HAP-1 (cell line): ENCODE measurements at regions of chr1 and their contacts with region 1.

Region 1: GRCh38 chr1:158124999-158125398 is 55.7 kb upstream of the CD1D start:
- DNase-seq: peak; percentile 89 to 94
- H3K4me3 ChIP-seq: no peak overlapping the region
- H3K4me1 ChIP-seq: no peaks in the 10 kb centered on the region
- H3K27me3 ChIP-seq: peaks cover 7% of the 10 kb centered on the region; the same call in 1 of the 2 replicates

Region 2: DNA sequence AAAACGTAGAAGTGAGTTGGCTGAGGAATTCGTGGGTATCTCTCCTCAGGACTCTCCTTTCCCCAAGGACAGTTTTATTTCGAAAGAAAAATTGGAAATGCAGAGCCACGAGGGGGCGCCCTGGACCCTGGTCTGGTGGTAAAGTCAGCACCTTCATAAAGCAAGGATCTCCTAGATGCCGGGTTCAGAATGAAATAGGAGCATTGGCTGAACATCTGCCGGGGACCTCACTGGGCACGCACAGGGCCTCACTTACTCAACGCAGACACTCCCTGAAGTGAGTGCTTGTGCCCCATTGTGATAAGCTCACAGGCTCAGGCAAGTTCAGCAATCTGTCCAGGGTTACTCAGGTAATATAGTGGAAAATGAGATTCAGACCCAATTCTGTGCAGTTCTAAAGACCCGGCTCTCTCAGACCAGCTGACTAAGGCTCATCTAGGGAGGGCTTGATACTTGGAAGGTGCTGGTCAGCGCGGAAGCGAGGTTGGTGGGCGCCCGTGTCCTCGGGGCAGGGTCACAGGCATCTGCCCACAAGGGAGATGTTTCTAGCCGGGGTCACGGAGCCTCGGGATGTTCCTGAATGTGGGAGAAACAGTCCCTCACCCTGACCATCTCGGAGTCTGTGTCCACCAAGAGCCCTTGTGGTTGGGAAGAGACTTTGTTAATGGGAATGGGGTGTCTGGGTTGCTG is 931.2 kb before region 1 on chr1:
- in situ Hi-C with region 1: loop called (anchors 25 kb)
- DNase-seq: peak; percentile 68 to 89
- H3K4me3 ChIP-seq: no peak overlapping the region
- H3K4me1 ChIP-seq: no peaks in the 10 kb centered on the region
- H3K27me3 ChIP-seq: peaks cover 8% of the 10 kb centered on the region; the same call in 1 of the 2 replicates

Region 3: DNA sequence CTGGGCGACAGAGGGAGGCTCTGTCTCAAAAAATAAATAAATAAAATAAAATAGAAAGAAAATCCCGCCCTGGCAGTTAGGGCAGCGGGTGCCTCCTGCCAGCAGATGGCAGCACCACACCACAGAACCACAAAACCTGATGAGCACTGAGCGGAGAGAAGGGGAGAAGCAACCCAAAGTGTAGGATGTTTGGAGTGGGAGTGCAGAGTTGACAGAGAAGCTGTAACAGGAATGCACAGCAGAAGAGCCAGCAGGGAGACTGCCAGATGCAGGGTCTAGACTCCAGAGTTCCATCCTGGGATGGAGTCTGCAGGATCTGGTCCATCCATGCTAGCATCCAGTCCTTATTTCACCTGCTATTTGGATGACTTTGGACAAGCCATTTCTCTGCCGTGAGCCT is 161.3 kb before region 1 on chr1:
- in situ Hi-C with region 1: loop called (anchors 5 kb)
- DNase-seq: peak; percentile 67 to 86
- H3K4me3 ChIP-seq: no peak overlapping the region
- H3K4me1 ChIP-seq: no peaks in the 10 kb centered on the region
- H3K27me3 ChIP-seq: peaks cover 45% of the 10 kb centered on the region

Region 4: DNA sequence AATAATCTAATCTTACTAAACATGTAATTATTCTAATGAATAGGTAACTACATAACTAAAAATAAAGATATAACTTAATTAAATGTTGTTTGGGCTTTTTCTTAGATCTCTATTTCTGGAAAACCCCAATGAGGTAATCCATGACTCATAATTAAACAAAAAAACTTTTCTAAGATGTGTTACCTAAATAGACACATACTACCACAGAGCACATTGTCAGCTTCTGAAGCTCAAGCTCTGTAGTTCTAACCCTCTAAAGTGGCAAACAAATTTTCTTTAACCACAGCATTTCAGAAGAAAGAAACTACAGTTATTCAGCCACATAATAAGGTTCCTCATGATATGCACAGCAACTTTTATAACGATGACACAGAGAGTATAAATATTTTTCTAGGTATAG is 591.3 kb after region 1 on chr1:
- in situ Hi-C with region 1: no loop called
- DNase-seq: no peak
- H3K4me3 ChIP-seq: no peak overlapping the region
- H3K4me1 ChIP-seq: no peaks in the 10 kb centered on the region
- H3K27me3 ChIP-seq: no peaks in the 10 kb centered on the region